PC-9 (cell line): ENCODE measurements at regions of chr16 and their contacts with region 1.

Region 1: GRCh38 chr16:66344533-66345145 is 21.9 kb upstream of the CDH5 start:
- DNase-seq: peak in 1 of 2 experiments; percentile 37
- H3K4me3 ChIP-seq: no peak overlapping the region
- H3K27ac ChIP-seq: no peak overlapping the region
- H3K4me1 ChIP-seq: no peaks in the 10 kb centered on the region
- H3K27me3 ChIP-seq: no peaks in the 10 kb centered on the region
- CTCF ChIP-seq: peak; percentile 90

Region 2: GRCh38 chr16:65905331-65905730 is 439.3 kb before region 1 on chr16:
- CTCF ChIA-PET with region 1: no interaction called
- POLR2A ChIA-PET with region 1: interaction called, 33 read pairs
- intact Hi-C with region 1: no loop called
- DNase-seq: no peak
- H3K4me3 ChIP-seq: no peak overlapping the region
- H3K27ac ChIP-seq: no peak overlapping the region
- H3K4me1 ChIP-seq: no peaks in the 10 kb centered on the region
- H3K27me3 ChIP-seq: peaks cover 50% of the 10 kb centered on the region
- CTCF ChIP-seq: no peak

Region 3: DNA sequence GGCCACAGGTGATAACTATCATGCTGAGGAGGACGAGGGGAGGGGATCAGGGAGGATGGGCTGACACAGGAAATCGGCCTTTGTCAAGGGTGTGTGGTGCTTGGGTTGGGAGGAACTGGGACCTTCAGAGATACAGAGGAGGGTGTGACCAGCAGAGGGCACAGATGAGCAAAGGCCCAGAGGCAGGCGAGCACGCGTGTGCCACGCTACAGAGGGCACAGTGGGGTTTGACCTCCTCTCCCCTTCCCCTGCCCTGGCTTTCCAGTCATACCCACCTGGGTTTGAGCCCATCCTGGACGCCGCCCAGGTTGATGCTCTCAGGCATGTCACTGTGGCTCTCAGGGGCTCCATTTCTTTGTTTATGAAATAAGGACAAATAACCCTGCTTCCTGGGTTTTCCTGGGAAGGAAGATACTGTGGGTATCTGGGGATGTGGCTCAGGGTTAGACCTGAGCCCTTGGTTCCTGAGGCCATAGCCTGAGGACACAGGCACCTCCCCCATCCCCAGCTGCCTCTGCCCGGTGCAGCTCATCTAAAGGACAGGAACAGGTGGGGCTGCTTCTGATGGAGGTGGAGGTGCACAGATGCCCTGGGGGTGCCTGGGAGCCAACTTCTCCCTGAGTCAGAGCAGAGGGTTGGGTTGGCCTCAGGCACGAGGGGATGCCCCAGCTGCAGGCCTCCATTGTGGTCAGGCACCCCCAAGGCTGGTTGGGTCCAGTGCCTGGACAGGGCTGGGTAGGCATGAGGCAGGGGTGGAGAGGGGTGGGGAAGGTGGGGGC is 134.3 kb after region 1 on chr16:
- CTCF ChIA-PET with region 1: no interaction called
- POLR2A ChIA-PET with region 1: no interaction called
- intact Hi-C with region 1: no loop called
- DNase-seq: peak; percentile 86 to 90
- H3K4me3 ChIP-seq: no peak overlapping the region
- H3K27ac ChIP-seq: peak overlapping the region; percentile 36; the same call in 1 of the 2 replicates
- H3K4me1 ChIP-seq: peaks cover 50% of the 10 kb centered on the region
- H3K27me3 ChIP-seq: no peaks in the 10 kb centered on the region
- CTCF ChIP-seq: peak; percentile 76

Region 4: GRCh38 chr16:66842765-66843164 is 498.1 kb after region 1 on chr16:
- CTCF ChIA-PET with region 1: no interaction called
- POLR2A ChIA-PET with region 1: no interaction called
- intact Hi-C with region 1: no loop called
- DNase-seq: no peak
- H3K4me3 ChIP-seq: no peak overlapping the region
- H3K27ac ChIP-seq: no peak overlapping the region
- H3K4me1 ChIP-seq: 0 out of 2 replicates have a peak, but pooled peaks cover 6% of the 10 kb centered on the region
- H3K27me3 ChIP-seq: no peaks in the 10 kb centered on the region
- CTCF ChIP-seq: no peak